ENCODE measurements at regions of chr1 and their contacts with region 1.

Region 1: GRCh38 chr1:70410604-70411359 is at the start of gene CTH:
- H3K4me3 ChIP-seq: peak within 1 kb of the TSS; percentile 61
- H3K27ac ChIP-seq: peak within 1 kb of the TSS; percentile 65
- H3K4me1 ChIP-seq: no peaks in the 10 kb centered on the region
- CTCF ChIP-seq: no peak

Region 2: GRCh38 chr1:70284366-70284765 is 126.4 kb before region 1 on chr1:
- CTCF ChIA-PET with region 1: no interaction called
- POLR2A ChIA-PET with region 1: interaction called, 10 read pairs
- H3K4me3 ChIP-seq: no peak overlapping the region
- H3K27ac ChIP-seq: no peak overlapping the region
- H3K4me1 ChIP-seq: no peaks in the 10 kb centered on the region
- CTCF ChIP-seq: no peak

Region 3: GRCh38 chr1:70354332-70355110 is 56.3 kb before region 1 on chr1 and contains the start of gene ANKRD13C:
- CTCF ChIA-PET with region 1: no interaction called
- POLR2A ChIA-PET with region 1: interaction called, 87 read pairs
- H3K4me3 ChIP-seq: peak within 1 kb of the TSS; percentile 76
- H3K27ac ChIP-seq: peak within 1 kb of the TSS; percentile 81
- H3K4me1 ChIP-seq: no peaks in the 10 kb centered on the region; the same call in 1 of the 2 replicates
- CTCF ChIP-seq: peak; percentile 90

Region 4: DNA sequence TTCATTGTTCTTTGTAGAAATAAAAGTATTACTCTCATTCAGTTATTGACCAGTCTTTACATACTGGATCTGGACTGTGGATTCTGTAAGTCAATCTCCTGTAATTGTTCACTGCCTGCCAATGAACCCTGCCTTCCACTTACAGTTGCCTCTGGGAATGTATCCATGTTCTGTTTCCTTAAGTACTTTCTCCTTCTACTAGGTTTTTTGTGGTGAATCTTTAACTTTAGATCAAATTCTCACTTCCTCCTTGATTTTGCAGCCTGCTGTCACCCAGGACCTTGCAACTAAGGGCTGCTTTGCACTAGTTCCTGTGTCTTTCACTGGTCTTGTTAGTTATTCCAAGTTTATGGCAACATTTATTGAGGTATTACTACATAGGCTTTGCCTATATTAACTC is 28.1 kb before region 1 on chr1:
- CTCF ChIA-PET with region 1: no interaction called
- POLR2A ChIA-PET with region 1: interaction called, 11 read pairs
- H3K4me3 ChIP-seq: no peak overlapping the region
- H3K27ac ChIP-seq: no peak overlapping the region
- H3K4me1 ChIP-seq: no peaks in the 10 kb centered on the region
- CTCF ChIP-seq: no peak

Region 5: GRCh38 chr1:70397014-70397413 is 13.8 kb before region 1 on chr1:
- CTCF ChIA-PET with region 1: interaction called, 6 read pairs
- POLR2A ChIA-PET with region 1: interaction called, 25 read pairs
- H3K4me3 ChIP-seq: no peak overlapping the region
- H3K27ac ChIP-seq: no peak overlapping the region
- H3K4me1 ChIP-seq: no peaks in the 10 kb centered on the region
- CTCF ChIP-seq: no peak

Region 6: DNA sequence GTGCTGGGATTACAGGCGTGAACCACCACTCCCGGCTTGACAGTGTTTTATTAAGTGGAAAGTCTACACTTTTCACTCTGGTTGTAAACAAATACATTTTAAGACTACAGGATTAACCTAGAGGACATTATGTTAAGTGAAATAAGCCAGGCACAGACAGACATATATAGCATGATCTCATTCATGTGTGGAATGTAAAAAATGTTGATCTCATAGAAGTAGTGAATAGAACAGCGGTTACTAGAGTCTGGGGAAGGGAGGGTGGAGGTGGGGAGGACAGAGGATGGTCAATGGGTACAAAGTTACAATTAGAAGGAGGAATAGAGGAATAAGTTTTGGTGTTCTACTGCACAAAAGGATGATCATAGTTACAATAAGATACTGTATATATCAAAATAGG is 17.2 kb after region 1 on chr1:
- CTCF ChIA-PET with region 1: no interaction called
- POLR2A ChIA-PET with region 1: interaction called, 11 read pairs
- H3K4me3 ChIP-seq: no peak overlapping the region
- H3K27ac ChIP-seq: no peak overlapping the region
- H3K4me1 ChIP-seq: no peaks in the 10 kb centered on the region
- CTCF ChIP-seq: no peak

Measured in HEK293 (cell line).